Lower leg skin (tissue), 4 donors: ENCODE measurements at regions of chr6 and their contacts with region 1.

Region 1: DNA sequence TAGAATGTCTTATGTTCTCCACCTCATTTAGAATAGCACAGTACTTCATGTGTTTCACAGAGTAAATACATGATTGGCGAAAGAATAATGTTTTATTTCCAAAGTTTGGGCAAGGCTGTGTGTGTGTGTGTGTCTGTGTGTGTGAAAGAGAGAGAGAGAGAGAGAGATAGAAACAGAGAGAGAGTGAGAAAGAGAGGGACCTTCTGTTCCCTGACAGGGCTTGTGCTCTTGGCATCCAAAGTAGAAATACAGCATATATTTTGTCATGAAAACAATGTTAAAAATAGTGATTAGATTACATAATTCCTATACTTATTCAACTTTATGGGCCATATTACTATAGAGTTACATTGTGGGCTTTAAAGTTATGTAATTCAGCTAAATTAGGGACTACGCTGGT is 201.2 kb downstream of the KIF6 start:
- DNase-seq: no peak
- H3K4me3 ChIP-seq: no peak overlapping the region
- CTCF ChIP-seq: no peak
- POLR2A ChIP-seq: no peak

Region 2: GRCh38 chr6:39464067-39464466 is 59.9 kb before region 1 on chr6:
- intact Hi-C with region 1: no loop called
- DNase-seq: no peak
- H3K4me3 ChIP-seq: no peak overlapping the region
- CTCF ChIP-seq: no peak
- POLR2A ChIP-seq: no peak

Region 3: DNA sequence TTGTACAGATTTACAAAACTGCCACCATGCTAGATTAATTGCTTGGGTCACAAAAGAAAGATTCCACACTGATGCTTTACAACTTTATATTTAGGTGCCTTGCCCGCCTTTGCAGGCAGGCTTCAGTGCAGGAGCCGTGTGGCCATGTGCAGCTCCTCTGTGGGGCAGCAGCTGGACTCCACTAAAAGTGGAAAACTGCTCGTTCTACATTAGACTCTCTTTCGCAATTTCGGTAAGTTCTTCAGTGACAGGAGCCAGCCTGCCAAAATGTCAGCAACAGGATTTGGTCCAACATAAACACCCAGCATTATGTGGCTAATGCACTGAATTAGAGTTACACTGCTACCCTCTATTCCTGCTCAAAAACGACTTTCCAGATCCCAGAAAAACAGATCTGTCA is 27.1 kb before region 1 on chr6:
- intact Hi-C with region 1: loop called (anchors 2 kb)
- DNase-seq: peak in 1 of 2 donors; percentile 16
- H3K4me3 ChIP-seq: no peak overlapping the region
- CTCF ChIP-seq: no peak
- POLR2A ChIP-seq: no peak

Region 4: GRCh38 chr6:39979461-39980328 is 455.7 kb after region 1 on chr6:
- intact Hi-C with region 1: no loop called
- DNase-seq: peak in 1 of 2 donors; percentile 30
- H3K4me3 ChIP-seq: no peak overlapping the region
- CTCF ChIP-seq: no peak
- POLR2A ChIP-seq: no peak

Region 5: DNA sequence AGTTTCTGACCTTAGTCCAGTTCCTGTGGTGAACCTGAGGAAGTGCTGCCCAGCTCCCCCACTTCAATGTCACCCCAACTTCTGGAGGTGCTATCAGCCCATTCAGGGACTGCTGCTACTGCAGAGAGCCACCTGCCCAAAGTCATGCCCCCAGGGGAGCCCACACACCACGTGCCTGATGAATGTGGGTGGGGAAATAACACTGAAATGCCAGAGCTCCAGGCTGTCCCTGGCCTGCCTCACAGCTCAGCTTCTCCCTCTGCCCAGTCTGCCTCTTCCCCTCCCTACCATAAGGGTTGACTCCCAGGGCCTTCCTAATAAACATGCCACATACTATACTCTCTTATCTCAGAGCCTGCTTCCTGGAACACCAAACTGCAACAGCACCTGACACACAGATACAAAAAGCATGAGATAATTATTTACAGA is 686.6 kb after region 1 on chr6:
- intact Hi-C with region 1: no loop called
- DNase-seq: no peak
- H3K4me3 ChIP-seq: no peak overlapping the region
- CTCF ChIP-seq: no peak
- POLR2A ChIP-seq: no peak